ENCODE measurements at regions of chr22 and their contacts with region 1.

Region 1: DNA sequence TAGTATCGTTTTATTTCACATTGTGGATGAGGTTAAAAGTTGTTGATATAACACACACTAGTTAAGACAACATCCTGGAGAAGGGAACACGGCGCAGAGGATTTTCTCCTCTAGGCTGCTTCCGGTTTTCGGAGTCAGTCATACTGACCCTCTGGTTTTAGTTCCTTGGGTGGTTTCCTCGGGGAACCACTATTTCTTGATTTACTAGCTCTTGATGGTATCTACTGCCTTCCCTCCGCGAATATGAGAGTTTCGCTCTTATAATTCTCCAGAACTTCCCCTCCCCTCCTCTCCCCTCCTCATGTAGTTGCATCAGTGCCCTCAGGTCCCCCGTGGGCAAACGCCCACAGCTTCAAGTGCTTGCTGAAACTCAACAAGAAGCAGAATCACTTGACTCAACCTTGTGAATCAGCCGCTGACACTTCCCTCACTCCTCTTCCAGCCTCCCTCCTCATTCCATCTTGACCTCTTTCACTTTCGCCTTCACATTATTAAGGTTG is 15.9 kb upstream of the APOBEC3A start:
- DNase-seq: peak; percentile 88
- ATAC-seq: peak; percentile 91
- H3K4me3 ChIP-seq: peak overlapping the region; percentile 12
- H3K27ac ChIP-seq: peak overlapping the region; percentile 64
- H3K4me1 ChIP-seq: peaks cover 33% of the 10 kb centered on the region
- H3K27me3 ChIP-seq: no peaks in the 10 kb centered on the region
- CTCF ChIP-seq: no peak
- EP300 ChIP-seq: peak; percentile 61 to 62; a peak in 1 of 4 replicates
- POLR2A ChIP-seq: peak; percentile 36; the same call in 1 of the 2 replicates
- RAD21 ChIP-seq: no peak

Region 2: GRCh38 chr22:38953577-38954413 is 12.3 kb after region 1 on chr22:
- CTCF ChIA-PET with region 1: interaction called, 24 read pairs
- POLR2A ChIA-PET with region 1: interaction called, 4 read pairs
- RAD21 ChIA-PET with region 1: interaction called, 10 read pairs
- SMC1A ChIA-PET with region 1: interaction called, 8 read pairs
- in situ Hi-C with region 1: no loop called
- intact Hi-C with region 1: no loop called
- DNase-seq: peak; percentile 85
- ATAC-seq: peak; percentile 94
- H3K4me3 ChIP-seq: peak overlapping the region; percentile 48
- H3K27ac ChIP-seq: peak overlapping the region; percentile 78
- H3K4me1 ChIP-seq: peaks cover 24% of the 10 kb centered on the region
- H3K27me3 ChIP-seq: no peaks in the 10 kb centered on the region
- CTCF ChIP-seq: no peak
- EP300 ChIP-seq: peak in 1 of 2 experiments; percentile 19; a peak in 1 of 4 replicates
- POLR2A ChIP-seq: peak; percentile 77
- RAD21 ChIP-seq: no peak

Region 3: DNA sequence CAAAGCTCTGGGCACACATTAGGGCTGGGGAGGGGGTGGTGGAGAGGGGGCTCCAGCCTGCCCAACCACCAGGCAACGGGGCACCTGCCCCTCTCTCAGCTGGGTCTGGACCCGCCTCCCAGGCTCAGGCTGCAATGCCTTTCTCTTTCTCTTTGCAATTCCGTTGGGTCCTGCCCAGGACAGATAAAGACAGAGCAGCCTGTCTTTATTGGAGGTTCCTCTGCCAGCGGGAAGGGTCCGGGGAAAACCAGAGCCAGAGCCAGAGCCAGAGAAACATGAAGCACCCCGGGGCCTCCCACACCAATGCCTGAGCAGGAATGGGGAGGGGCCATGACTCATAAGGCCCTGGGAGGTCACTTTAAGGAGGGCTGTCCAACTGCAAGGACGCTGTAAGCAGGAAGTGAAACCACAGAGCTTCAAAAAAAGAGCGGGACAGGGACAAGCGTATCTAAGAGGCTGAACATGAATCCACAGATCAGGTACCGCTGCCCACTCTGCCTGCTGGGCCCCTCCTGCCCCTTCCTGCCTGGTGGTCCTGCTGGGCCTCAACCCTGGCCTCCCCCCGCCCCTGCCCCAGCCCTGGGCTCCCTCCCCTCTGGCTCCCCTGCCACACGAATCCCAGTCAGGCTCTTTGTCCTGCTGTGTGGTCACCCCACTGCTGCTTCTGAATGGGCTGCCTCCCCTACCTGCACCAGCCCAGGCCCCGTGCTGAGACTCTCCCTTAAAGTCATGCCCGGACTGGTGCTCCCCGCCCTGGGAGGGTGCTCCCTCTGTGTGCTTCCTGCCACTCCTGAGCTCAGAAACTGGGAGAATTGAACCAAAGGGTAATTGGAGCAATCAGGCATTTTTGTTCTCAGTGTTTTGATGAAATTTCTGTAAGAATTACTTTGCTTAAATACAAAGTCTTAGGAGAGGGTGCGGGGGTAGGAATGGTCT is 40.7 kb after region 1 on chr22 and contains the start of gene APOBEC3B:
- CTCF ChIA-PET with region 1: interaction called, 3 read pairs
- POLR2A ChIA-PET with region 1: interaction called, 3 read pairs
- RAD21 ChIA-PET with region 1: interaction called, 5 read pairs
- SMC1A ChIA-PET with region 1: interaction called, 5 read pairs
- in situ Hi-C with region 1: no loop called
- intact Hi-C with region 1: loop called (anchors 5 kb)
- DNase-seq: peak; percentile 85
- ATAC-seq: peak; percentile 84
- H3K4me3 ChIP-seq: peak within 1 kb of the TSS; percentile 64
- H3K27ac ChIP-seq: peak within 1 kb of the TSS; percentile 67
- H3K4me1 ChIP-seq: peaks cover 34% of the 10 kb centered on the region
- H3K27me3 ChIP-seq: no peaks in the 10 kb centered on the region
- CTCF ChIP-seq: no peak
- EP300 ChIP-seq: no peak
- POLR2A ChIP-seq: peak; percentile 42; the same call in 1 of the 2 replicates
- RAD21 ChIP-seq: no peak
- polyA plus RNA-seq, gene APOBEC3B: 56.6 to 75.1 TPM

Region 4: DNA sequence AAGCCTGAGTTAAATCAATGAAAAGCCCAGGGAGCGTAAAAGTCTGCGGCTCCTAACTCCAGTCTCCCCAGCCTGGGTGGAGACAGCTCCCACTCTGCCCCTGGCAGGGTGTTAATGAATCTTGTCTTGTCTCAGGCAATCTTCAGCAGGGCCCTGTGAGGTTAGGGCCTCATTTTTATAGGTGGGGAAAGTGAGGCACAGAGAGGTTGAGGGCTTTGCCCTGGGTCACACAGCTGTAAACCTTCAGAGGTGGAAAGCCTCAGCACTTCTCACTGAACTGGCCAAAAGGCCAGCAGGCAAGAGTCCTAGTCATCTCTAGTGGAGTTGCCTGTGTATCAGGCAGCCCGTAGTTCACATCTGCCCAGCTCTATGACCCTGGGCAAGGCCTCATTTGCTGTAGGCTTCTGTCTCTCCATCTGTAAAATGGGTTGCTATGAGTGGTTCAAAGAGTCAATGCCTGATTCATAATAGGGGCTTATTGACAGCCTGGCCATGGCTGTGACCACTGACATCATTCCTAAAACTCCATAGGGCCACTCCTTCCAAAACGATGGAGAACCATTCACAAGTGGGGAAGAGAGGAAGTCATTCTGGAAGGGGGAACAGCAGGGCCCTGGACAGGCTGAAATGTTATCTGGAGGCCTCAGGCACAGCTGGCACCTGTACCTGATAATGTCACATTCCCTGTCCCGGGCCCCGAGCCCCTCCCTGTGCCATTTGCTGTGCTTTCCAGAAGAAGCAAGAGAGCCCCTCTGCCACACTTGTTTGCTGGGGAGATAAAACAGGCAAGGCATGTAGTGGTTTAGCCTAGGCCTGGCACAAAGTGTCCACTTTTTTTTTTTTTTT is 204.9 kb after region 1 on chr22:
- CTCF ChIA-PET with region 1: interaction called, 3 read pairs
- POLR2A ChIA-PET with region 1: interaction called, 14 read pairs
- RAD21 ChIA-PET with region 1: no interaction called
- SMC1A ChIA-PET with region 1: interaction called, 4 read pairs
- in situ Hi-C with region 1: no loop called
- intact Hi-C with region 1: no loop called
- DNase-seq: no peak
- ATAC-seq: no peak
- H3K4me3 ChIP-seq: peak overlapping the region; percentile 61
- H3K27ac ChIP-seq: peak overlapping the region; percentile 30; the same call in 1 of the 2 replicates
- H3K4me1 ChIP-seq: peaks cover 45% of the 10 kb centered on the region
- H3K27me3 ChIP-seq: no peaks in the 10 kb centered on the region
- CTCF ChIP-seq: no peak
- EP300 ChIP-seq: no peak
- POLR2A ChIP-seq: no peak
- RAD21 ChIP-seq: no peak